ENCODE measurements at regions of chr13 and their contacts with region 1.

Region 1: DNA sequence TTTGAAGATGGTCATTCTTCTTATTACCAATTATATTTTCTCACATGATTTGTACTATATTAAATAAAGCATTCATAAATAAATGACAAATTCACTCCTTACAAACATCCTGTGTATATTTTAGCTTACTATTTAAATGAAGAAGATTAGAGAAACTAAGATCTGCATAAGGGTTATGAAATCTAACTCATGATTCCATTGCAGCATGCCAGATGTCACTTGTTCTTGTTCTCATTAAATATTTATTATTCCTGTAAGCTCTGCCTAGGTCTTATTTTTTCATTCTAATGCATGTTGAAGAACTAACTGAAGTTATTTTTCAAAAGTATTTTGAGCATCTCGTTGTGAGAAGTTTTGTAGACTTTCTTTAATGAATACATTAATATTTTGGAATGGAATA is 18.3 kb downstream of the NUP58 start:
- DNase-seq: no peak
- ATAC-seq: no peak
- H3K4me3 Mint-ChIP-seq: no peak overlapping the region
- H3K27ac Mint-ChIP-seq: no peak overlapping the region
- H3K4me1 Mint-ChIP-seq: peaks cover 5% of the 10 kb centered on the region
- H3K27me3 Mint-ChIP-seq: no peaks in the 10 kb centered on the region
- CTCF ChIP-seq: no peak

Region 2: GRCh38 chr13:25267715-25268114 is 52.1 kb before region 1 on chr13:
- CTCF ChIA-PET with region 1: interaction called, 3 read pairs
- POLR2A ChIA-PET with region 1: no interaction called
- intact Hi-C with region 1: loop called (anchors 10 kb)
- DNase-seq: no peak
- ATAC-seq: peak; percentile 70
- H3K4me3 Mint-ChIP-seq: no peak overlapping the region
- H3K27ac Mint-ChIP-seq: no peak overlapping the region
- H3K4me1 Mint-ChIP-seq: peaks cover 3% of the 10 kb centered on the region
- H3K27me3 Mint-ChIP-seq: no peaks in the 10 kb centered on the region
- CTCF ChIP-seq: peak; percentile 52

Region 3: GRCh38 chr13:25585000-25585399 is 265.2 kb after region 1 on chr13:
- CTCF ChIA-PET with region 1: no interaction called
- POLR2A ChIA-PET with region 1: no interaction called
- intact Hi-C with region 1: no loop called
- DNase-seq: no peak
- ATAC-seq: no peak
- H3K4me3 Mint-ChIP-seq: no peak overlapping the region
- H3K27ac Mint-ChIP-seq: no peak overlapping the region
- H3K4me1 Mint-ChIP-seq: no peaks in the 10 kb centered on the region
- H3K27me3 Mint-ChIP-seq: peaks cover 11% of the 10 kb centered on the region
- CTCF ChIP-seq: no peak

Measured in activated CD8-positive, alpha-beta T cell treated with anti-CD3 and anti-CD28 coated beads for 36 hours (primary cell).